ENCODE measurements at regions of chr4 and their contacts with region 1.

Region 1: DNA sequence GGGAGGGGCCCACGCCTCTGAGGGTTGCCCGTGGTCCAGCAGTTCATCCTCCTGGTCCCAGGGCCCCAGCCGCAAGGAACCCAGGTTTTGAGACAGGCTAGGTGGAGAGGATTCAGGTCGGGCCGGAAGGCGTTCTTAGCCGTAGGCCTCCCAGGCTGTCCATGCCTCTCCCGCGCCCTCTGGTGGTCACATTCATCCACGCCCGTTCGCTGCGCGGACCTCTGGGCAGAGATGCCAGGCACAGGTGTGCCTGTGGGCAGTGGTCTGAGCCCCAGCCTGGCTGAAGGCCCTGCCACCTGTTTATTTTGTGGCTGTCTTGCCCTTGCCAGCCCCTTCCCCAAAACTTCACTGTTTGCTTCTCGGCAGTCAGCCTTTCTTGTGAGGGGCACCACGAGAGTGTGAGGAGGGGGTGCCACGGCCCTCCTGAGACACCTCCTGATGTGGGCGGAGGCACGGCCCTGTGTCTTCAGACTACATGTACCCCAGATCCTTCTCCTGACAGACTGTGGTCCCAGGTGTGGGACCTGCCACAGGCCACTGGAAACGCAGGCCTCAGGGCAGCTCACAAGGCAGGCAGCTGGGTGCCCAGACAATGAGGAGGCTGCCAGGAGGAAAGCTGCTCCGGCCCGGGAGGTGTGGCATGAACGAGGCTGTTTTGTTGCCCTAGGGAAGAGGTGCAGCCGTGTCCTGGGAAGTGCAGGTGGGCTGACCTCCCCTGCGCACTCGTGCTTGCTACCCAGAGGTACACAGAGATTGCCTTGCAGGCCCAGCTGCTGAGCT is 5.0 kb downstream of the UVSSA start:
- DNase-seq: peak; percentile 86
- H3K4me3 ChIP-seq: no peak overlapping the region
- H3K27ac ChIP-seq: no peak overlapping the region
- H3K4me1 ChIP-seq: peaks cover 13% of the 10 kb centered on the region
- H3K27me3 ChIP-seq: no peaks in the 10 kb centered on the region
- CTCF ChIP-seq: peak; percentile 87 to 94 (median 92)
- POLR2A ChIP-seq: no peak

Region 2: DNA sequence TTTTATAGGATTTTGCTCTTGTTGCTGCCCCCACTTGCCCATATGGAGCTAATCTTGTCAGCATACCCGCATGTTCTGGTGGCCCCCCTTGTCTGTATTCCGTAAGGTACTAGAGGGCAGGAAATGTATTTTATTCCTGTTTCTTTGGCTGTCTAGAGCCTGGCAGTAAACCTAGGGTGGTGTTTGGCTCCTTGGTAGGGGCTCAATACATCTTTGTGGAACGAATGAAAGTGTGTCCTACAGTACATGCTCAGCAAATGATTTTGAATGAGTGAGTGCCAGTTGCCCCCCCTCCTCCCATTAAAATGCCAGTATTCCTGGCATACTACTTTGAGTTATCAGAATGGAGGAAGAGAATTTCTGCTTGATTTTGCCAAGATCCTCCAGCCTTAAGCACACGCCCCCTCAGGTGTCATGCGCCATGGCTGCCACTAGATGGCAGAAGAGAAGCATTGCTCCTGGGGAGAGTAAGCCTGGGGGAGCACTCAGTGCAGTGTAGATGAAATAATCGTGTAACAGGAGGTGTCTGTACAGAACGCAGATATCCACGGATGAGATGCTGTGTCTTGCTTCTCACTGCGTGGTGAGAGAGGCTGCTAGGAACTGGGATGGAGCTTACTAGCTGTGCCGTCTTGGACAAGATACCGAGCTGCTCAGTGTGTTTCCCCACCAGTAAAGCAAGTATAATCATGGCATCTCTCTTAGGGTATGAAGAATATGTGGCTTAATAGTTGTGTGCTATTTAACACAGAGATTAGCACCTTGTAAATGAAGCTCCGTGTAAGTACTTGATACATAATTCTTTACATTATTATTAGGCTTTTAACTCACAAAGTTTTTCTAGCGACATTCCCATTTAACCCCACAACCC is 221.5 kb before region 1 on chr4:
- intact Hi-C with region 1: loop called (anchors 2 kb)
- DNase-seq: peak; percentile 51
- H3K4me3 ChIP-seq: no peak overlapping the region
- H3K27ac ChIP-seq: no peak overlapping the region
- H3K4me1 ChIP-seq: no peaks in the 10 kb centered on the region
- H3K27me3 ChIP-seq: no peaks in the 10 kb centered on the region
- CTCF ChIP-seq: peak; percentile 92 to 98 (median 97)
- POLR2A ChIP-seq: no peak

Region 3: DNA sequence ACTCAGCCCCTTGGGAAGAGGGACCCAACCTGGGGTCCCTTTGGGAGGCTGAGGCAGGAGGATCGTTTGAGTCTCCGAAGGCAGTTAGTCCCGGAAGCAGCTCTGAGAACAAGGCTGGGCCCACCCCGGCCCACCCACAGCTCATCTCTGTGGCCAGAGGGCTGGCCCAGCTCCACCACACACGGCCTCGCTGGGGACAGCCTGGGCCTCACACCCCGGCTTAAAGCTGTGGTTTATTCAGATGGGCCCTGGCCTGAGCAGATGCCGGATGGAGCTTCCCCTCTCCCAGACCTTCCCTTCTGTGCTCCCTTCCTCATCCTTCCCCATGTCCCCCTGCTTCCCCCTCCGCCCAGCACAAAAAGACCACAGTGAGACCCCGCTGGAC is 277.6 kb after region 1 on chr4:
- intact Hi-C with region 1: loop called (anchors 5 kb)
- DNase-seq: no peak
- H3K4me3 ChIP-seq: no peak overlapping the region
- H3K27ac ChIP-seq: no peak overlapping the region
- H3K4me1 ChIP-seq: no peaks in the 10 kb centered on the region
- H3K27me3 ChIP-seq: no peaks in the 10 kb centered on the region
- CTCF ChIP-seq: no peak
- POLR2A ChIP-seq: no peak

Region 4: GRCh38 chr4:1727117-1728031 is 375.3 kb after region 1 on chr4:
- intact Hi-C with region 1: loop called (anchors 2 kb)
- DNase-seq: no peak
- H3K4me3 ChIP-seq: no peak overlapping the region
- H3K27ac ChIP-seq: no peak overlapping the region
- H3K4me1 ChIP-seq: no peaks in the 10 kb centered on the region
- H3K27me3 ChIP-seq: no peaks in the 10 kb centered on the region
- CTCF ChIP-seq: no peak
- POLR2A ChIP-seq: no peak

Measured in prostate gland (tissue), 2 donors.